PC-9 (cell line): ENCODE measurements at regions of chr3 and their contacts with region 1.

Region 1: DNA sequence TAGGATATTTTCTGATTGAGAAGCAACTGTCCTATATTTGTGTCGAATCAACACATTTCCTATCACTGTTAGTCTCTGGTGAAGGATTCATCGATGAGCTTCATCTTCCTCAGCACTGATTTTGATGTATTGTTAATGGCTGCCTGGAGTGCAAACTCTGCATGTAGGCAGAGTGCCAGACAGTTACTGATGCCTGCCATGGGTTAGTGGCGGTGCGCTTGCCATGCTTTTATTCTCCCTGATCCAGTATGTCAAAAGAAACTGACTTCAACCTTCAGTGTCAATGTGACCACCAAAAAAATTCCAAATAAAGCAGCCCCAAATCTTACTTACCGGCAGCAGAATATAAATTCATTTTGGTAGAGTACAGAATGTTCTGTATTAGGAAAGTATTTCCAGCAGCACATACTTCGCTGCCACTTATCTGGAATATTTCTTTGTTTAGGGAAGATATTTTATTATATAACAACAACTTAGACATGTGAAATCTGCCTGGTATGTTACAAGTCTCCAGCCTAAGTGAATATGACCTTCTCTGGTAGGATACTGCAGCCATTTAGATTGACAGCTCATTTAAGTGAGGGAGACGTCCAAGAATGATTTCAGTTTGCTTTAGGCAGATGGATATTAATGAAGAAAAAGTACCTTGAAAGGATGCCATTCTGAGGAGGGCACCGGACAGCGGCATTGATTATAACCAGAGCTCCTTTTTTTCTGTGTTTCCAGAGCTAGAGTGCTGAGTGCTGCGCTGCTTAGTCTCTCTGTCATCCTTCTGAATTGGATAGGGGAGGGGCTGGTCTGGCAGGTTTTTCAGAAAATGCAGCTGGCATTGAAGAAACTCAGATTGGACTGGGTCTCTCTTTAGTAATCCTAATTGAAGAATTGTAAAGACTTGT is 59.9 kb downstream of the ARHGEF26 start:
- DNase-seq: peak in 1 of 2 experiments; percentile 20
- H3K4me3 ChIP-seq: no peak overlapping the region
- H3K27ac ChIP-seq: no peak overlapping the region
- H3K4me1 ChIP-seq: peaks cover 7% of the 10 kb centered on the region; the same call in 1 of the 2 replicates
- H3K27me3 ChIP-seq: no peaks in the 10 kb centered on the region
- CTCF ChIP-seq: no peak

Region 2: DNA sequence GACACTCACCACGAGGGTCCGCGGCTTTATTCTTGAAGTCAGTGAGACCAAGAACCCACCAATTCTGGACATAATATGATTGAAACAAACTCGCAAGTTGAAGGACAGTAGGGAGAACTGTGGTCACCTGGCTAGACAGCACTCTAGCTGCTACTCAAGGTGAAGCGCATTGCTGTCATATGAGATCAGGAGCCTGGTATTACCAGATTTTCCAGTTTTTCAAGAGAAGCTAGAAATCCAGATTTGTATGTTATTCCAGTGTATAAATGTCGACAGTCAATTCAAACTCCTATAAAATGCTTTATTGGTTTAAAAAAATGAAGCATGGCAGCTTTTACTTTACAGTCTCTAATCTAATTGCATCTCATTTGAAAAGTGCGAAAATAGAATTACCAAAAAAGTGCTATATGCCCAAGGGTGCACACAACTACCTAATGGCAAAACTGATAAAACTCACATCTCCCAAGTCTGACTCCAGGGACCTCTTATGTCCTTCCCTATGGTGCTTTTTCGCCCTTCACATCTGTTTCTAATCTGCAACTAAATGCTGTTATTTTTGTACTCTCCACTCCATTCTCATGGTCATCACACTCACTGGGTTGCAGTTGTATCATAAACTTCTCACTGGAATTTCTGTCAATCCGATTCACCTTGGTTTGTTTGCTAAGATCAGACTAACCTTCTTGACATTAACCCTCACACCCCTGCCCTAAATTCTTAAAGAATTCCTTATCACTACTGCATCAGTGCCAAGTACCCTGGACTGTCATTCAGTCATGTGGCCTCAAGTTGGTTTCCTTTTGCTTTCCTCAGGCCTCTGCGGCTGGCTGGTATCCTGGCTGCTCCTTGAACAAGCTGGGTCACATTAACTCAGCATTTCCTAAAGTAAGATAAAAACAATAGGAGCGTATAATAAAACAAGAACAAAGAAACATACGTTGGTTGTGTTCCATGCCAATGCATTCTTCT is 91.3 kb before region 1 on chr3:
- CTCF ChIA-PET with region 1: no interaction called
- POLR2A ChIA-PET with region 1: no interaction called
- intact Hi-C with region 1: loop called (anchors 5 kb)
- DNase-seq: peak; percentile 37 to 93
- H3K4me3 ChIP-seq: peak overlapping the region; percentile 36; the same call in 1 of the 2 replicates
- H3K27ac ChIP-seq: peak overlapping the region; percentile 39
- H3K4me1 ChIP-seq: peaks cover 26% of the 10 kb centered on the region
- H3K27me3 ChIP-seq: no peaks in the 10 kb centered on the region
- CTCF ChIP-seq: no peak

Region 3: DNA sequence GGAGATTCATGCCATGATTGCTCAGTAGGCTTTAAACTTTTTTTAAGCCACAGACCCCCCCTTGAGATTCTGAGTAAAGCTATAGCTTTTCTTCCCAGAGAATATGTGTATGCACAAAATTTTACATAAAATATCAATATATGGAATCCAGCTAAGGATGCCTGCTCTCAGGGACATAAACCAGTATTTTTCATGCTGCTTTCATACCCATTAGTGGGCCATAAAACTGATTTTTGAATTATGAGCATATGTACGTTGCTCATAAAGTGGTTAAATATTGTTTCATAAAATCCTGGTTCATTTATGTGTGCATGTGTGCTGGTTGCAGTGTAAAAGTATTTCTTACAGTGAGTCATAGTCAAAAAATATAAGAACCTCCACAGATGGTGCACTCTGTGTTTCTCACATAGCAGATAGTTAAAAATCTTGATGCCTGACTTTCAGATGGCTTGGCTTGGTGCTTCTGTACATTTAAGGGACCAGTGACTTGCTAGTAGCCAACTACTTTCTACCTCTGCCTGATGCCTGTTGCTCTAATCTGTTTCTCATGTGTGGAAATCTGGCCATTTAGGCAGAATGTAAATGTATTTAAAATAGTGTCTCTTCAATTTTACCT is 12.0 kb after region 1 on chr3:
- CTCF ChIA-PET with region 1: no interaction called
- POLR2A ChIA-PET with region 1: interaction called, 19 read pairs
- intact Hi-C with region 1: no loop called
- DNase-seq: no peak
- H3K4me3 ChIP-seq: no peak overlapping the region
- H3K27ac ChIP-seq: no peak overlapping the region
- H3K4me1 ChIP-seq: no peaks in the 10 kb centered on the region
- H3K27me3 ChIP-seq: no peaks in the 10 kb centered on the region
- CTCF ChIP-seq: no peak

Region 4: GRCh38 chr3:154734468-154734867 is 553.4 kb after region 1 on chr3:
- CTCF ChIA-PET with region 1: no interaction called
- POLR2A ChIA-PET with region 1: no interaction called
- intact Hi-C with region 1: no loop called
- DNase-seq: no peak
- H3K4me3 ChIP-seq: no peak overlapping the region
- H3K27ac ChIP-seq: no peak overlapping the region
- H3K4me1 ChIP-seq: no peaks in the 10 kb centered on the region
- H3K27me3 ChIP-seq: no peaks in the 10 kb centered on the region
- CTCF ChIP-seq: no peak